Mucosa of descending colon (tissue), 3 donors: ENCODE measurements at regions of chr7 and their contacts with region 1.

Region 1: DNA sequence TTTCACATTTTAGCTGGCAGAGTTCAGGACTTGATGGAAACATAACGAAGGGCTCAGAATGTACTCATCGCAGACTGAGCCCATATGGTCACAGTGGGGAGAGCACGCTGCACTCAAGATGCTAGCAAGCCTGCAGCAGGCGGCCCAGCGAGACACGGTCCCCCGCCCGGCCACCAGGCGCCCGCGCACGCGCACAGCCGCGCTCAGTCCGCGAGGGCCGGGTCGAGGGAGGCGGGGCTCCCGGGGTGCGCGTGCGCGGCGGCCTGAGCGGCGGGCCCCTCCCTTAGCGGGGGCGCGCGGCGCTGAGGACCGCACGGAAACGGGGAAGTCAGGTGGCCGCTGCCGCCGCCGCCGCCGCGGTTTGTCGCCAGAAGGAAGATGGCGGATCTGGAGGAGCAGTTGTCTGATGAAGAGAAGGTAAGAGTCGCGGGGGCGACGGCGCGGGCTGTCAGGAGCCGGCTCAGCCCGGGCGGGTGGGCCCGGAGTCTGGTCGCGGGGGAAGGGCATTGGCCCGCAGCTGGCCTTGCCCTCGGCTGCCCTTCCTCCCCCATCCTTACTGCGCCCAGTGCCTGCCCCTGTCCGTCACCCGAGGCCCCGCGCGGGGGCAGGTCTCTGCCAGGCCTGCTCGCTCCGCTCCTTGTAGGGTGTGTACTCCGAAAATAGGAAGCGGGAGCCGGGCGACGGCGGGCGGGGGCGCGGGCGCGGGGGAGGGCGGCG is at the start of gene CAPZA2:
- DNase-seq: peak; percentile 93 to 96 (median 95)
- ATAC-seq: peak; percentile 99
- H3K4me3 ChIP-seq: peak within 1 kb of the TSS; percentile 60
- H3K4me1 ChIP-seq: peaks cover 8% of the 10 kb centered on the region
- CTCF ChIP-seq: peak; percentile 29
- total RNA-seq, gene CAPZA2: 161 to 303 (median 221) TPM

Region 2: DNA sequence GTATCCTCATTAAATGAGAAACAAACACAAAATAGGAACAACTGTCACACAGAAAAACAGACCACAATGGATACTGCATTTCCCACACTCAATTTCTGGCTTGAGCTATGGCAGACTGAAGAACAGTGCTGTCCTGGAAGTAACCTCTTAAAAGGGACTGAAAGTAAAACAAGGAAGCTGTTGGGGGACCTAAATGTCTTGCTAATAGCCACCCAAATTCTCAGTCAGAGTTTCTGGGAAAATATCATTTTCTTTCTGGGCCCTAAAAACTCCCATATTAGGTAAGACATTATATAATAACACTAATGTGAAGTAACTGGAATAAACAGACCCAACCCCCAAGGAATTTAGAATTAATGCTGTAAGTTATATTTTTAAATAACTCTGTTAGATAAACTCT is 750.9 kb before region 1 on chr7:
- intact Hi-C with region 1: no loop called
- DNase-seq: no peak
- ATAC-seq: no peak
- H3K4me3 ChIP-seq: no peak overlapping the region
- H3K4me1 ChIP-seq: no peaks in the 10 kb centered on the region
- CTCF ChIP-seq: no peak

Region 3: GRCh38 chr7:116953727-116954442 is 91.5 kb after region 1 on chr7:
- intact Hi-C with region 1: loop called in 1 of 2 experiments (anchors 5 kb)
- DNase-seq: peak; percentile 65 to 78 (median 67)
- ATAC-seq: peak; percentile 87
- H3K4me3 ChIP-seq: peak overlapping the region; percentile 85
- H3K4me1 ChIP-seq: peaks cover 15% of the 10 kb centered on the region
- CTCF ChIP-seq: no peak